Ovary (tissue), 10 donors: ENCODE measurements at regions of chr9 and their contacts with region 1.

Region 1: DNA sequence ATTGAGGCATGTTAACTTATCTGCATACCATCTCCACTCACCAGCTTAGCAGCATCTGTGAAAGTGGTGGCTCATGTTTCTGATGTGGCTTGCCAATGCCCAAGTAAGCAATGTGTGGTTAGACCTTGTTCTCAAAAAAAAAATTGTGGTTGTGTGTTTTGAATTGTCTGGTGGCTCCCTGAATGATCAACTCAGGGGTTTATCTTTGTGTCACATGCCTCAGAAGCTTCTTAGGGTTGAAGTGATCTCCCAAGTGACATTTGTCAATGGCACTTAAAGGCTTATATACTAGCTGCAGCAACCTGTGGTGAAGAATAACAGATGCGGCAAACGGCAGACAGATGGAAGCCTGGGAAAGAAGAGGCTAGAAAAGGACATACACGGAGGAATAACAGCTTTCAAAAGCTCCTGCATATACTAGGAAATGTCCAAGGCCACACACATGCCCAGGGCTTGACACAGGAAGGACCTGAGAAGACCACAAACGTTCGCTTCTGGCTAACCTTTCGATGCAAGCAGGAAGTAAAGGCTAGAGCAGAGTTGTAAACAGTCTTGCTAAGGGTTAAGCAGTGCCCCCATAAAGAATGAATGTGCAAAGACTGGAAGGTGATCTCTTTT is 42.2 kb upstream of the FSD1L start:
- DNase-seq: no peak
- H3K4me3 ChIP-seq: no peak overlapping the region
- H3K27ac ChIP-seq: no peak overlapping the region
- H3K4me1 ChIP-seq: no peaks in the 10 kb centered on the region
- H3K27me3 ChIP-seq: no peaks in the 10 kb centered on the region
- CTCF ChIP-seq: no peak
- EP300 ChIP-seq: no peak
- POLR2A ChIP-seq: no peak

Region 2: DNA sequence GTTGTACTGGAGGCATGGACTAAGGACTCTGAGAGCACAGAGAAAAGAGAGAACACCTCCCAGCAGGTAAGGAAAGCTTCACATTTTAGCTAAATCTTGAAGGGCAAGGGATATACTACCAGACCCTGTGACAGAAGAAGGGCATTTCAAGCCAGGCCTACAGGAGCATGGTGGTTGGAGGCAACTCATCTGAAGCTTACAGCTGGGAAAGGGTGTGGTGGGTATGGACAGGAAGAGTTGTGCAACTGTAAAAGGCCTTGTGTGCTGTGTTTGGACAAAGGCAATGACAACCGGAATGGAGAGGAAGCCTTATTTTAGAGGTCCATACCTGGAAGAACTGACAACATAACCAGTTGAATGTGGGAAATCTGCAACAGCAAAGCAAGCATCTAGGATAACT is 610.5 kb before region 1 on chr9:
- intact Hi-C with region 1: loop called in 1 of 4 experiments (anchors 10 kb)
- DNase-seq: no peak
- H3K4me3 ChIP-seq: no peak overlapping the region
- H3K27ac ChIP-seq: no peak overlapping the region
- H3K4me1 ChIP-seq: no peaks in the 10 kb centered on the region
- H3K27me3 ChIP-seq: no peaks in the 10 kb centered on the region
- CTCF ChIP-seq: no peak
- EP300 ChIP-seq: no peak
- POLR2A ChIP-seq: no peak

Region 3: GRCh38 chr9:105466898-105467455 is 61.4 kb after region 1 on chr9:
- intact Hi-C with region 1: no loop called
- DNase-seq: no peak
- H3K4me3 ChIP-seq: no peak overlapping the region
- H3K27ac ChIP-seq: no peak overlapping the region
- H3K4me1 ChIP-seq: no peaks in the 10 kb centered on the region
- H3K27me3 ChIP-seq: no peaks in the 10 kb centered on the region
- CTCF ChIP-seq: no peak
- EP300 ChIP-seq: no peak
- POLR2A ChIP-seq: no peak